PC-9 (cell line): ENCODE measurements at regions of chr13 and their contacts with region 1.

Region 1: GRCh38 chr13:91154558-91155353 is 192.7 kb upstream of the MIR17HG start:
- DNase-seq: no peak
- H3K4me3 ChIP-seq: no peak overlapping the region
- H3K27ac ChIP-seq: no peak overlapping the region
- H3K4me1 ChIP-seq: peaks cover 18% of the 10 kb centered on the region
- H3K27me3 ChIP-seq: no peaks in the 10 kb centered on the region
- CTCF ChIP-seq: no peak

Region 2: GRCh38 chr13:90956031-90956430 is 198.7 kb before region 1 on chr13:
- CTCF ChIA-PET with region 1: no interaction called
- POLR2A ChIA-PET with region 1: no interaction called
- intact Hi-C with region 1: no loop called
- DNase-seq: no peak
- H3K4me3 ChIP-seq: no peak overlapping the region
- H3K27ac ChIP-seq: no peak overlapping the region
- H3K4me1 ChIP-seq: no peaks in the 10 kb centered on the region
- H3K27me3 ChIP-seq: no peaks in the 10 kb centered on the region
- CTCF ChIP-seq: no peak

Region 3: GRCh38 chr13:91142572-91142971 is 12.2 kb before region 1 on chr13:
- CTCF ChIA-PET with region 1: no interaction called
- POLR2A ChIA-PET with region 1: no interaction called
- intact Hi-C with region 1: loop called (anchors 1 kb)
- DNase-seq: peak; percentile 7 to 53
- H3K4me3 ChIP-seq: no peak overlapping the region
- H3K27ac ChIP-seq: no peak overlapping the region
- H3K4me1 ChIP-seq: peaks cover 12% of the 10 kb centered on the region
- H3K27me3 ChIP-seq: no peaks in the 10 kb centered on the region
- CTCF ChIP-seq: no peak